ENCODE measurements at regions of chr1 and their contacts with region 1.

Region 1: DNA sequence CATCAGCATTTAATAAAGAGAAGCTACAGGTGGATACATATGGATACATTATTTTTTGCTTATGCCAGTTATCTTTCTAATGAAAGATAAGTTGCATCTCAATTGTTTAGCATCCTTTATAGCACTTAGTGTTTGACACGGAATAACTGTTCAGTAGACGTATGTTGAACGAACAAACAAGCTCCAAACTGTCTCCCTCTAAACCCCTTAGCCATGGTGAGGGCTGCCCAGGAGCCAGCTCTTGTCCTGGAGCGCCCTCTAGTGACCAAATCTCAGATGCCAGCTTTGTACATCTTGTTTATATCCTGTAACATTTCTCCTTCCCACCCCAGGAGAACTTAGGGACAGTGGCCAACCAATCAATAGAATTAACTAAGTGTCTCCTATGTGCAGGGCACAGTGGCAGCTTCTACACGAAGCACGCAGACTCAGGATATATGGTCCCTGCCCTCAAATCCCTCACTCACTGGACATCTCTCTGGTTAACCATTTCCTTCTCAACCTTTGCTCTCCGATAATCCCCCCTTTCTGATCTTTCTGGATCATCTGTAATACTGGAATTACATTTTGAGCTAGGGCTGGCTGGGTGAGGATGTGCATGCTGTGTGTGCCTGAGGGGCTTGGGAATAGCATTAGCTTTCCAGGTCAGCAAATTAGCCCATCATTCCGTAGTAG is 22.9 kb downstream of the KCNA10 start:
- DNase-seq: peak; percentile 79 to 90 (median 85)
- H3K4me3 ChIP-seq: no peak overlapping the region
- H3K27ac ChIP-seq: no peak overlapping the region
- H3K4me1 ChIP-seq: peaks cover 8% of the 10 kb centered on the region
- H3K27me3 ChIP-seq: no peaks in the 10 kb centered on the region
- CTCF ChIP-seq: peak; percentile 80 to 99 (median 85)
- EP300 ChIP-seq: no peak
- POLR2A ChIP-seq: no peak

Region 2: GRCh38 chr1:110203021-110203661 is 292.9 kb before region 1 on chr1:
- intact Hi-C with region 1: loop called in 3 of 4 experiments (anchors 2 to 10 kb)
- DNase-seq: peak in 3 of 5 donors; percentile 38 to 69 (median 50)
- H3K4me3 ChIP-seq: no peak overlapping the region
- H3K27ac ChIP-seq: no peak overlapping the region
- H3K4me1 ChIP-seq: no peaks in the 10 kb centered on the region
- H3K27me3 ChIP-seq: no peaks in the 10 kb centered on the region
- CTCF ChIP-seq: peak; percentile 70 to 84 (median 80)
- EP300 ChIP-seq: no peak
- POLR2A ChIP-seq: no peak

Region 3: DNA sequence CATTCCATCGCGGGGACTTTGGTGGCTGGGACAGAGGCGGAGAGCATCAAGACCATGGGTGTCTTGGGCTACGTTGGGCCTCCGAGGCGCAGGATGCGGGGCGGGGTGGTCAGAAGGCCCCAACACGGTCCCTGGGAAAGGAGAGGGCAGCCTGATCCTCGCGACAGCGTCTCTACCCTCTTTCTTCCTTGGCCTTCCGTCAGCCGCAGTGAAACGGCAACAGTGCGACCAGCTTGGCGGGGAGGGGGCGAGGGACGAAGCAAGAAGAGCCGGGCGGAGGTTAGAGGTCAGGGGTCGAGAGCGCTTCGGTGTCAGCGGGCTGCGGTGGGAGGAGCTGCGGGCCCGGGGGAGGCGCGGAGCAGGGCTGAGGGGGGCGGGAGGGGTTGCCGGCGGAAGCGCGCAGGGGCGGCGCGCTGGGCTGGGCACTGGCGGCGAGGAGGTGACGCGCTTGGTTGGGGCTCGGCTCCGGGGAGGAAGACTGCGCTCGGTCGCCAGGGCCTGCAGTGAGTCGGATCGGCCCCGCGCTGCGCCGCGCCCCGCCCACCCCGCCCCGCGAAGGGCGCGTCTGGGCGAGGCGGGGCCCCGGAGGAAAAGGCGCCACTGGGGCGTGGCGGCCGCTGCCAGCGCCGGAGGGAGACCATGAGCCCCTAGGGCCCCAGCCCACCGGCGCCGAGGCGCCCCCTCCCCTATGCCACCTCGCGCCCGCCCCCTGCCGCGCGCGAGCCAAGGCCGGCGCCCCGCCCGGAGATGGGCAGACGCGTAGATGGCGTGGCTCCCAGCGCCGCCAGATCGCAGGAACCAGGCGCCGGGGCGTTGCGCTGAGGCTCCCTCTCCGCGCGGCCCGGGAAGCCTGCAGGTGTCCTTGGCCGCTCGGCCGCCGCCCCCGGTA is 286.1 kb before region 1 on chr1 and contains the start of gene KCNC4:
- intact Hi-C with region 1: loop called in 2 of 4 experiments (anchors 2 to 10 kb)
- DNase-seq: peak; percentile 82 to 87 (median 86)
- H3K4me3 ChIP-seq: peak within 1 kb of the TSS; percentile 66
- H3K27ac ChIP-seq: peak within 1 kb of the TSS; percentile 70 to 80
- H3K4me1 ChIP-seq: peaks cover 13% of the 10 kb centered on the region
- H3K27me3 ChIP-seq: no peaks in the 10 kb centered on the region
- CTCF ChIP-seq: no peak
- EP300 ChIP-seq: no peak
- POLR2A ChIP-seq: peak; percentile 35
- total RNA-seq, gene KCNC4: 5.5 to 18.0 (median 14.2) TPM

Region 4: GRCh38 chr1:110312188-110313121 is 183.6 kb before region 1 on chr1:
- intact Hi-C with region 1: loop called in 3 of 4 experiments (anchors 5 to 10 kb)
- DNase-seq: peak; percentile 78 to 87 (median 86)
- H3K4me3 ChIP-seq: no peak overlapping the region
- H3K27ac ChIP-seq: no peak overlapping the region
- H3K4me1 ChIP-seq: peaks cover 2% of the 10 kb centered on the region
- H3K27me3 ChIP-seq: no peaks in the 10 kb centered on the region
- CTCF ChIP-seq: peak; percentile 76 to 93 (median 89)
- EP300 ChIP-seq: no peak
- POLR2A ChIP-seq: peak; percentile 11

Region 5: DNA sequence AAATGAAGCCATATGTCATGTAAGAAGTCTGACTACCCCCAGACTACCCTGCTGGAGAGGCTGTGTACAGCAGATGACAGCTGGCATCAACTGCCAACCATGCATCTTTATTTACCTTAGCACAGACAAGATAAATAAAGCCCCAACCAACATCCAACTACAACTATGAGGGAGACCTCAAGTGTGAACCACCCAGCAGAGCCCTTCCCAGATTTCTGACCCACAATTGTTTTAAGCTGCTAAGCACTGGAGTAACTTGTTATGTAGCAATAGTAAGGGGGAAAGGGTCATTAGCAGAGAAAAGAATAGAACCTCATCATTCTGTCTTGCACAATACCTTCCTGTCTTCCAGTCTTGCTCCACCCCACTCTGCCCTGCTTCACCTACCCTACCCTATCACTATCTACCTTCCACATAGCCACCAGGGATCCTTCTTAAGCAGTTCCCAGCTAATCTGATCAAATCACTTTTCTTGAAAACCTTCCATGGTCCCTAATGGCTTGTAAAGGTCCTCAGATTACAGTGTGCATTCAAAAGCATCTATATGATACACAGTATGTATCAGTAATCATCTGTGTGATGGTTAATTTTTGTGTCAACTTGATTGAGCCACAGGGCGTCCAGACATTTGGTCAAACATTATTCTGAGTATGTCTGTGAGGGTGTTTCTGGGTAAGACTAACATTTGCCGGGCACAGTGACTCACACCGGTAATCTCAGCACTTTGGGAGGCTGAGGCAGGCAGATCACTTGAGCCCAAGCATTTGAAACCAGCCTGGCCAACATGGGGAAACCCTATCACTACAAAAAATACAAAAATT is 176.5 kb before region 1 on chr1:
- intact Hi-C with region 1: loop called in 3 of 4 experiments (anchors 5 to 10 kb)
- DNase-seq: no peak
- H3K4me3 ChIP-seq: no peak overlapping the region
- H3K27ac ChIP-seq: no peak overlapping the region
- H3K4me1 ChIP-seq: no peaks in the 10 kb centered on the region
- H3K27me3 ChIP-seq: no peaks in the 10 kb centered on the region
- CTCF ChIP-seq: no peak
- EP300 ChIP-seq: no peak
- POLR2A ChIP-seq: no peak

Region 6: GRCh38 chr1:110460253-110461220 is 35.5 kb before region 1 on chr1:
- intact Hi-C with region 1: loop called in 1 of 4 experiments (anchors 5 kb)
- DNase-seq: peak; percentile 78 to 90 (median 86)
- H3K4me3 ChIP-seq: no peak overlapping the region
- H3K27ac ChIP-seq: no peak overlapping the region
- H3K4me1 ChIP-seq: peaks cover 5% of the 10 kb centered on the region
- H3K27me3 ChIP-seq: no peaks in the 10 kb centered on the region
- CTCF ChIP-seq: peak; percentile 89 to 97 (median 94)
- EP300 ChIP-seq: no peak
- POLR2A ChIP-seq: no peak